H1 (cell line): ENCODE measurements at regions of chr20 and their contacts with region 1.

Region 1: DNA sequence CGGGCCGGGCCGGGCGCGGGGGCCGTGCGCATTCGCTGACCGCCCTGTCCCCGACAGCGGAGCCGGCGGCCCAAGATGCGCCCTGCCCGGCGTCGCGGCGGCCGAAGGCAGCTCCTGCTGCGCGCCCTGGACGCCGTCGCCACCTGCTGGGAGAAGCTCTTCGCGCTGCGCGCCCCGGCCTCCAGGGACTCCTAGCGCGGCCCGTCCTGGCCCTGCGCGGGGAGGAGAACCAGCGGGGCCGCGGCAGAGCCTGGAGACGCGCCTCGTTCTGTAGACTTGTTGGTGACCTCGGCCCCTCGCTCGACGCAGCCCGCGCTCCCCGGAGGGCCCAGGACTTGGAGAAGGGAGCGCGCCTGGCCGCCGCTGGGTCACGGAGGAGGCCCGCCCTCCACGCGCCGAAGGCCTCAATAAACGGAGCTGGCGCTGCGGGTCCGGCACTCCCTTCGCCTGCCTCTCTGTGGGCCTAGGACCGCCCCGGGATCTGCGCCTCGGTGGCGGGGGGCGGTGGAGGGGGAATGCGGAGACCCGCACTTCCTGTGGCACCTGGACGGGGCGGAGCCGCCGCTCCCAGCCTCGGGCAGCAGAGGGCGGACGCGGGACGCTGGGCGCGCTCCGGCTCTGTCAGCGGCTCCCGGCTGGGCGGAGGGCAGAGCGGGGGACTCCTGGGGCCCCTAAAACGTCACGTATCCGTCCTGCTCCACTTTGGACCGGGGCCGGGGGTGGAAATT is 2.7 kb downstream of the C20orf204 start:
- DNase-seq: peak in 1 of 2 experiments; percentile 92
- H3K4me3 ChIP-seq: peak overlapping the region; percentile 35 to 73 (median 48)
- H3K27ac ChIP-seq: no peak overlapping the region
- H3K4me1 ChIP-seq: peaks cover 0 to 23% (median 17%) of the 10 kb centered on the region in 4 experiments; a peak in 6 of 7 replicates
- H3K27me3 ChIP-seq: peaks cover 16 to 56% (median 47%) of the 10 kb centered on the region in 4 experiments
- CTCF ChIP-seq: peak; percentile 73 to 87 (median 84)
- EP300 ChIP-seq: no peak
- POLR2A ChIP-seq: no peak
- RAD21 ChIP-seq: peak; percentile 66 to 82

Region 2: GRCh38 chr20:63980806-63981728 is 57.7 kb before region 1 on chr20 and contains the start of gene PRPF6:
- CTCF ChIA-PET with region 1: interaction called, 11 read pairs
- POLR2A ChIA-PET with region 1: interaction called, 5 read pairs
- DNase-seq: peak; percentile 94 to 95
- H3K4me3 ChIP-seq: peak within 1 kb of the TSS; percentile 68 to 89 (median 83)
- H3K27ac ChIP-seq: peak within 1 kb of the TSS; percentile 88
- H3K4me1 ChIP-seq: peaks cover 4 to 24% (median 12%) of the 10 kb centered on the region in 4 experiments; a peak in 6 of 7 replicates
- H3K27me3 ChIP-seq: peaks cover 0 to 9% (median 2%) of the 10 kb centered on the region in 4 experiments; a peak in 3 of 7 replicates
- CTCF ChIP-seq: peak; percentile 97 to 100 (median 98)
- EP300 ChIP-seq: peak in 1 of 2 experiments; percentile 36; a peak in 1 of 3 replicates
- POLR2A ChIP-seq: peak in 1 of 2 experiments; percentile 87; a peak in 2 of 3 replicates
- RAD21 ChIP-seq: peak; percentile 35 to 47; a peak in 3 of 4 replicates
- total RNA-seq, gene PRPF6: 76.9 and 80.7 TPM in 2 replicates

Region 3: DNA sequence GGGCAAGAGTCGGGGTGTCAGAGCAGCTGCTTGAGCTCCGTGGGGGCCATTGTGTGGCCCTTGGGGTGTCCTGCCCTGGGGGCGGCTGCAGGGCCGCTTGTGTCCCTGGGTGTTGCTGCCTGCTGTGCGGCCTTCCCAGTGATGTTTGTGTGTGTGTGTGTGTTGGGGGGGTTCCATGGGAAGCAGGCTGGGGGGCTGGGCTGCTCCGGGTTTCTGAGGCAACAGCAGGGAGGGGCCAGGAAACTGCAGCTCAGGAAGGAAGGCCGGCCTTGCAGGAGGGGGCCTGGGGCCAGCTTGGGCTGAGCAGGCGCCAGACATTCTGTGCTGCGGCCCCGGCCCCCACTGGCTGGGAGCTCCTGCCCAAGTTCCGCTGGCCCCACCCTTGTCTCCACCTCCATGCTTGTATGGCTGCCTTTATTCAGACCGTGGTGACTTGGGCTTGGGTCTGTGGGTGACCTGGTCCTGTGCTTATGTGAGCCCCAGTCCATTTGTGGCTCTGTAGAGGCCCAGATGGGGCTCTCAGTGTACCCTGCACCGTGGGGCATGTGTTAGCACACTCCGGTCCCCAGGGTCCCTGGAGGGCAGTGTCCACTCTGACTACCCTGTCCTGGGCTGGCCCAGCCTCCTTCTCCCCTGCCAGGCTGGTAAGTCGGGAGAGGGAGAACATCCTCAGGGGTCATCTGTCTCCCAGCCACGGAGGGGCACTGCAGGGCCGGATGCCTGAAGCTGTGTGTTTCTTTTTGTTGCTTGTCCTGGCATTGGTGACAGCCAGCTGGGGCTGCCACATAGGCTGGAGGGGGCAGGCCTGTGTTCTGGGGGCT is 15.3 kb after region 1 on chr20:
- CTCF ChIA-PET with region 1: interaction called, 73 read pairs
- POLR2A ChIA-PET with region 1: interaction called, 24 read pairs
- DNase-seq: no peak
- H3K4me3 ChIP-seq: no peak overlapping the region
- H3K27ac ChIP-seq: no peak overlapping the region
- H3K4me1 ChIP-seq: peaks cover 0 to 28% (median 15%) of the 10 kb centered on the region in 4 experiments; a peak in 6 of 7 replicates
- H3K27me3 ChIP-seq: peaks cover 15 to 30% (median 22%) of the 10 kb centered on the region in 4 experiments
- CTCF ChIP-seq: peak; percentile 53 to 67 (median 64)
- EP300 ChIP-seq: no peak
- POLR2A ChIP-seq: no peak
- RAD21 ChIP-seq: peak; percentile 47 to 59; a peak in 3 of 4 replicates

Region 4: DNA sequence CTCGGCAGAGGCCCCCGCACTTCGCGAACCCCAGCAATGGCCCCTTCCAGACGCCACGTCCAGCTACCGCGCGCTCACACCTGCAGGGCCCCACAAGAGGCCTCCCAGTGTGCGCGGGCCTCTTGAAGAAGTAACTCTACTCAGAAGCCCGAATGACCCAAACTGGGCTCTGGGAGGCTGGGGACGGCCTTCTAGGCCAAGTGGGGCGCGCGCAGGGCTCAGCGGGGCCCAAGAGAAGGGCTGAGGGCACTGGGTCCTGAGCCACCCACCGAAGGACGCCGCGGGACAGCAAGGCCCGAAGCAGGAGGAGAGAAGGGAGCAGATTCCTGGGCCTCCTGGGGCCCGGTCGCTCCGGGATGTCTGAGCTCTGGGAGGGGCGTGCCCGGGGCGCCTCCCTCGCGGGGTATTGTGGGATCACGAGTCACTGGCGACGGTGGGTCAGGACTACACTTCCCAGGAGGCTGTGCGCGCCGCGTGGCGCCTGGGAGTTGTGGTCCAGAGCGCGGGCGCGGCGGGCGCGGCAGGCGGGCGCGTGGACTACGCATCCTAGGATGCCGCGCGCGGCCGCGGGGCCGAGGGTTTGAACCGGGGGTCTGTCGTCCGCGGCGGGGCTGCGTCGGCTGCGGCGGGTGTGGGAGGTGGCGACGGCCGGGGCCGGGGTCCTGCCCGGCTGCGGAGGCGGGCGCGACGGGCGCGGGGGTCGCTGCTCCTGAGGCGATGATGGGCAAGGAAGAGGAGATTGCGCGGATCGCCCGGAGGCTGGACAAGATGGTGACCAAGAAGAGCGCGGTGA is 24.1 kb after region 1 on chr20 and contains the start of gene TCEA2:
- CTCF ChIA-PET with region 1: interaction called, 73 read pairs
- POLR2A ChIA-PET with region 1: interaction called, 9 read pairs
- DNase-seq: peak in 1 of 2 experiments; percentile 95
- H3K4me3 ChIP-seq: peak within 1 kb of the TSS; percentile 66 to 81 (median 72)
- H3K27ac ChIP-seq: no peak within 1 kb of the TSS
- H3K4me1 ChIP-seq: peaks cover 3 to 15% (median 9%) of the 10 kb centered on the region in 4 experiments
- H3K27me3 ChIP-seq: no peaks in the 10 kb centered on the region; a peak in 2 of 7 replicates
- CTCF ChIP-seq: 0 out of 4 replicates have a peak, but pooled peaks of 1 of the 3 experiments have one; percentile 3
- EP300 ChIP-seq: no peak
- POLR2A ChIP-seq: peak in 1 of 2 experiments; percentile 21; a peak in 1 of 3 replicates
- RAD21 ChIP-seq: no peak
- total RNA-seq, gene TCEA2: 41.4 and 46.3 TPM in 2 replicates

Region 5: DNA sequence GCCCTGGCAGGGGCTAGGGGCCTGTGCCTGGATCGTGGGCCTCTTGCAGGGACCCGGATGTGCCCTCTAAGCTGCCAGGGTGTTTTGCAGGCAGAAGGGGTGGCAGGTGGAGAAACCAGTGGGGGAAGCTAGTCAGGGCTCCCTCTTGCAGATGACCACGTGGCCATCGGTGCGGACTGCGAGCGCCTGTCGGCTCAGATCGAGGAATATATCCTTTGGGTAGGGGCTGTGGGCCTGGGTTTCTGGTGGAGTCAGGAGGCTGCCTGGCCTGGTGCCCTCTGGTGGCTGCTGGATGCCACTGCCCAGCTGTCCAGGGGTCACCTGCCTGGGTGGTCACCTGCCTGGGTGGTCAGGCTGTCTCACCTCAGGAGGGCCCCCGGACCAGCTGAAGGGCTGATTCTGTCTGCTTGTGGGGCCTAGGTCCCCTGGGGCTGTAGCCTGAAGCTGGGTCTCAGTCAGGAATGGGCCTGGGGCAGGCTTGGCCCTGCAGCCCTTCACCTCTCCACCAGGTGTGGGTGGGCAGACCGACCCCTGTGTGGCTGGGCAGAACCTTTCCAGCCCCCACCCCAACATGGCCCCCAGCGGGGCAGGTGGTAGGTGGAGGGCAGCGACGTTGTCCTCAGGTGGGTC is 31.0 kb after region 1 on chr20:
- CTCF ChIA-PET with region 1: interaction called, 32 read pairs
- POLR2A ChIA-PET with region 1: interaction called, 5 read pairs
- DNase-seq: peak in 1 of 2 experiments; percentile 89
- H3K4me3 ChIP-seq: no peak overlapping the region
- H3K27ac ChIP-seq: no peak overlapping the region
- H3K4me1 ChIP-seq: peaks cover 0 to 16% (median 5%) of the 10 kb centered on the region in 4 experiments; a peak in 6 of 7 replicates
- H3K27me3 ChIP-seq: no peaks in the 10 kb centered on the region
- CTCF ChIP-seq: peak; percentile 84 to 97 (median 94)
- EP300 ChIP-seq: peak; percentile 35; a peak in 1 of 3 replicates
- POLR2A ChIP-seq: no peak
- RAD21 ChIP-seq: peak; percentile 53 to 69

Region 6: DNA sequence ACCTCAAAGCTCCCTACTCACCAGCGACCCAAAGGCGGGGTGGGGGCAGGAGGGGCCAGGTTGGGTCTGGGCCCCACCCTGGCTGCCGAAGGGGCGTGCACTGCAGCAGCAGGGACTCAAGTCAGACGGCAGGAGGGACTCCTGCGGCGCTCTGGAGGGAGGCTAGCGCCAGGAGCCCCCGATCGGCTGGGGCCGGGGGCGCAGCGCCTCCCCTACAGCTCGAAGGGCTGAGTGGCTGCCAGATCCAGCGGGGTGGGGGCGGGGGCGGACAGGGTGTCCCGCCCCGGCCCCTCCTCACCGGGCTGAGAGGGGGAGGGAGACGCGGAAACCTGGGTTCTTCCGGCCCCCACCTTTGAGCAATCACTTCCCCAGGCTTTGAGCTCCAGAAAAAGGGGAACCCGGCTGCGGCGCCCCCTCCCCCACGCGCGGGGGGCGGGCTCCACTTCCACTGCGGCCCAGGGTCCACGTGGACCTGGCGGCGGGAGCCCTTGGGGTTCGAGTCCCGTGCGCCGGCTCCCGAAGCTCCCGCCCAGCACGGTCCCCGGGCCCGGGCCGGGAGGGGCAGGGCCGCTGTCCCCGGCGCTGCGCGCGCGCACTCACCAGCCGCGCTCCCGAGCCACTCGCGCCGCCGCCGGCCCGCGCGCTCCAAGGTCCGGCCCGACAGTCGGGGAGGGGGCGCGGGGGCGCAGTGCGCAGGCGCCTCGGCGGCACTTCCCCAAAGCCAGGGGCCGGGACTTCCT is 40.7 kb after region 1 on chr20 and contains the start of gene RGS19:
- CTCF ChIA-PET with region 1: interaction called, 10 read pairs
- POLR2A ChIA-PET with region 1: interaction called, 5 read pairs
- DNase-seq: peak in 1 of 2 experiments; percentile 86
- H3K4me3 ChIP-seq: peak within 1 kb of the TSS; percentile 60 to 92 (median 71)
- H3K27ac ChIP-seq: no peak within 1 kb of the TSS; the same call in 1 of the 2 replicates
- H3K4me1 ChIP-seq: peaks cover 0 to 35% (median 18%) of the 10 kb centered on the region in 4 experiments; a peak in 6 of 7 replicates
- H3K27me3 ChIP-seq: peaks cover 2 to 36% (median 29%) of the 10 kb centered on the region in 4 experiments
- CTCF ChIP-seq: no peak
- EP300 ChIP-seq: no peak
- POLR2A ChIP-seq: no peak
- RAD21 ChIP-seq: no peak
- total RNA-seq, gene RGS19: 12.7 and 13.1 TPM in 2 replicates